CD8-positive, alpha-beta T cell (primary cell): ENCODE measurements at regions of chr9 and their contacts with region 1.

Region 1: DNA sequence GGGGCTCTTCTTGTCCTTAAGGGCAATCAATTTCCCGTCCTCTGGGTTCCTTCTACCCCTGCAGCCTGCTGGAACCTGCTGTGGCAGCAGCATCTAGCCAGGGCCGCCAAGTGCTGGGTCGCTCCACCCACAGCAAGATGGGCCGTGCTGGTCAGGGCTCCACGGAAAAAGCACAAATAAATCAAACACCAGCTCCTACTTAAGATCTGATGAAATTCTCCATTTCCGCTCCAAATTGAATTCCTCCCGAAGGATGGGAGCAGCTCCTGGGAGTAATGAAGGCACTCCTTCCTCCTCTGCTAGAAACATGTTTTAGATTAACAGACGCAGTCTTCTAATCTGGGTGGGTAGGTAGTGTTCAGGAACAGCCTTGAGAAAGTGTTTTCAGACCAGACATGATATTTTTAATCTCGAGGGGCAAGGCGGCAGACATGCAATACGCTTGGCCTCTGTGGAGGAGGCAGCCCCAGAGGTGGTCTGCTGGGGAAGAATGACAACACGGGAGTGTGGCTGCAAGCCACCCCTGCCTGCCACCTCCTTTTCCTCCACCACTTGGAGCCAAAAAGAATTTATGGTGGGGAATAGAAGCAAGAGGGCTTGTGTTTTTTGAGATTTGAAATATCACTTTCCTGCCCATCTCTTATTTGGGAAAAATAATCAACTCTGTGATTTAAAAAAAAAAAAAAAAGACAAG is 194.0 kb downstream of the AOPEP start:
- DNase-seq: no peak
- ATAC-seq: no peak
- H3K4me3 ChIP-seq: no peak overlapping the region
- H3K4me3 Mint-ChIP-seq: no peak overlapping the region
- H3K27ac ChIP-seq: no peak overlapping the region
- H3K27ac Mint-ChIP-seq: no peak overlapping the region
- H3K4me1 ChIP-seq: no peaks in the 10 kb centered on the region
- H3K4me1 Mint-ChIP-seq: peaks cover 3% of the 10 kb centered on the region
- H3K27me3 ChIP-seq: no peaks in the 10 kb centered on the region
- H3K27me3 Mint-ChIP-seq: no peaks in the 10 kb centered on the region
- CTCF ChIP-seq: no peak

Region 2: DNA sequence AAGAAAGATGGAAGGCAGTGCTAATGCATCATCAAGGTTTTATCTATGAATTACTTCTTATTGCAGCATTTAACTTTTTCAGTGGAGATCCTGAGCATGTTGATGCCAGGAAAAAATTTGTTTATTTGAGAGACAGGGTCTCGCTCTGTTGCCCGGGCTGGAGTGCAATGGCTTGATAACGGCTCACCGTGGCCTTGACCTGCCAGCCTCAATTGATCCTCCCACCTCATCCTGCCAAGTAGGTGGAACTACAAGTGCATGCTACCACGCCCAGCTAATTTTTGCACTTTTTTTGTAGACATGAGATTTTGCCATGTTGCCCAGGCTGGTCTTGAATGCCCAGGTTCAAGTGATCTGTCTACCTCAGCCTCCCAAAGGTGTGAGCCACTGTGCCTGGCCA is 146.9 kb before region 1 on chr9:
- CTCF ChIA-PET with region 1: interaction called, 3 read pairs
- POLR2A ChIA-PET with region 1: no interaction called
- intact Hi-C with region 1: loop called in 1 of 2 experiments (anchors 1 kb)
- DNase-seq: no peak
- ATAC-seq: no peak
- H3K4me3 ChIP-seq: no peak overlapping the region
- H3K4me3 Mint-ChIP-seq: no peak overlapping the region
- H3K27ac ChIP-seq: no peak overlapping the region
- H3K27ac Mint-ChIP-seq: no peak overlapping the region
- H3K4me1 ChIP-seq: no peaks in the 10 kb centered on the region
- H3K4me1 Mint-ChIP-seq: peaks cover 5% of the 10 kb centered on the region
- H3K27me3 ChIP-seq: no peaks in the 10 kb centered on the region
- H3K27me3 Mint-ChIP-seq: no peaks in the 10 kb centered on the region
- CTCF ChIP-seq: no peak

Region 3: DNA sequence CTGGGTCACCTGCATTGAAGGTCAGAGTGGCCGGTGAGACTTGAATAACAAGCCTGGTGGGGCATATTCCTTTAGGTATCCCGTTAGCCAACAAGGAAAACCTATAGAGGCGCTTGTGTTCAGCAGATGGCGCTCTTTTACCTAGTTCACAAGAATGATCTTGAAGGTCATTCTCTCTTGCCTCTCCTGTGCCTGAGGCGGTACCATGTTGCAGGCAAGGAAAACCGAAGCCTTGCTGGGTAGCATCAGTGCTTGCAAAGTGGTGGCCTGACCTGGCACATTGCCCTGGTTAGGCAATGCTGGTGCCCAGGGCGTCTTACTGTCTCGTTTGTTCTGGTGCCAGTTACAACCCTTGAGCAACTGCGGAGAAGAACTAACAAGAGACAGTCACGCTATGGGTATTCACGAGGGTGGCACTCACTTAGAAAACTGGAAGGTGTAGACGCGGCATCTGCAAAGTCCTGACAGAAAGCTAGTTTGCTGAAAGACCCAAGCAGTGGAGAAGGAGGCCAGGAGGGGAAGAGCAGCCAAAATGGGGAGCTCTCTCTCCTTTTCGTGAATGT is 137.4 kb before region 1 on chr9:
- CTCF ChIA-PET with region 1: interaction called, 30 read pairs
- POLR2A ChIA-PET with region 1: no interaction called
- intact Hi-C with region 1: loop called (anchors 1 to 2 kb)
- DNase-seq: peak; percentile 4 to 64 (median 37)
- ATAC-seq: no peak
- H3K4me3 ChIP-seq: no peak overlapping the region
- H3K4me3 Mint-ChIP-seq: no peak overlapping the region
- H3K27ac ChIP-seq: no peak overlapping the region
- H3K27ac Mint-ChIP-seq: no peak overlapping the region
- H3K4me1 ChIP-seq: no peaks in the 10 kb centered on the region
- H3K4me1 Mint-ChIP-seq: peaks cover 4% of the 10 kb centered on the region
- H3K27me3 ChIP-seq: no peaks in the 10 kb centered on the region
- H3K27me3 Mint-ChIP-seq: no peaks in the 10 kb centered on the region
- CTCF ChIP-seq: peak; percentile 53

Region 4: DNA sequence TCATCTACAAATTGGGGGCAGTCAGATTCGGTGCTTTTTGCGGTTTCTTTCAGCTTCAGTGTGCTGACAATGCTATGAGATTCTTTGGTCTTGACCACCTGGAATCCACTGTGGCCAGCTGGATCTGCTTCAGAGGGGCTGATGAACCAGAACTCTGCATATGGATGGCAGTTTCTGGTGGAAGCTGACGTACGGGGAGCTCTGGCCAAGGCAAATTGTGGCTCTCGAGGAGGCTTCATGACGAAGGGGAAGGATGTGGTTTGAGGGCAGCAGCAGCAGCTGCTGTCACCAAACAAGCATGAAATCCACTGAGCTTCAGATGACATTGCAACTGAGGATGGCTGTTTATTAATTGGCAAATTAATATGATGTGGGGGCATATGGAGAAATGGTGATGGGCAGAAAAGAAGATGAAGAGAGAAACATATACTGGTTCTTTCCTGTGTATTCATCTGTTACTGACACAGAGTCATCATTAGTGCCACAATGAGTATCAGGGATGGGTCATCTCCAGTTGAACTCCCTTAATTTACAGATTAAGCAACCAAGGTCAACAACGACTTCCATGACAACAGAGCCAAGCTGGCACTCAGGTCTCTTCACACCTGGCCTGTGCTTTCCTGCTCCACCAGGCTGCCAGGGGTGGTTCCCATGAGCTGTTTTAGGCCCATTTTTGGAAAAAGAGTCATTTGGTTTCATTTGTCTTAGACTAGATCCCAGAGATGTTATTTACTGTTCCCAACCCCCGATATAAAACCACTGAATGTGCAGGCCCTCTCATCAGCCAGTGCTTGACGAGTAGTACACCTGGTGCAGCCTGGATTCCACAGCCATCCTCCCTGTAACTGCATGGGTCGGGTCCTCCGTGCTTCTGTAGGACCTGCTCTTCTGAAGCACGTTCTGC is 59.3 kb before region 1 on chr9:
- CTCF ChIA-PET with region 1: no interaction called
- POLR2A ChIA-PET with region 1: no interaction called
- intact Hi-C with region 1: loop called in 1 of 2 experiments (anchors 5 kb)
- DNase-seq: peak; percentile 47 to 94 (median 70)
- ATAC-seq: peak; percentile 86
- H3K4me3 ChIP-seq: peak overlapping the region; percentile 5 to 31
- H3K4me3 Mint-ChIP-seq: peak overlapping the region; percentile 76
- H3K27ac ChIP-seq: peak overlapping the region; percentile 34 to 83
- H3K27ac Mint-ChIP-seq: peak overlapping the region; percentile 88
- H3K4me1 ChIP-seq: peaks cover 29% of the 10 kb centered on the region
- H3K4me1 Mint-ChIP-seq: peaks cover 46% of the 10 kb centered on the region
- H3K27me3 ChIP-seq: no peaks in the 10 kb centered on the region
- H3K27me3 Mint-ChIP-seq: no peaks in the 10 kb centered on the region
- CTCF ChIP-seq: no peak

Region 5: GRCh38 chr9:94961870-94962269 is 41.3 kb after region 1 on chr9:
- CTCF ChIA-PET with region 1: no interaction called
- POLR2A ChIA-PET with region 1: no interaction called
- intact Hi-C with region 1: no loop called
- DNase-seq: no peak
- ATAC-seq: no peak
- H3K4me3 ChIP-seq: no peak overlapping the region
- H3K4me3 Mint-ChIP-seq: no peak overlapping the region
- H3K27ac ChIP-seq: no peak overlapping the region
- H3K27ac Mint-ChIP-seq: no peak overlapping the region
- H3K4me1 ChIP-seq: no peaks in the 10 kb centered on the region
- H3K4me1 Mint-ChIP-seq: no peaks in the 10 kb centered on the region
- H3K27me3 ChIP-seq: no peaks in the 10 kb centered on the region
- H3K27me3 Mint-ChIP-seq: no peaks in the 10 kb centered on the region
- CTCF ChIP-seq: no peak

Region 6: DNA sequence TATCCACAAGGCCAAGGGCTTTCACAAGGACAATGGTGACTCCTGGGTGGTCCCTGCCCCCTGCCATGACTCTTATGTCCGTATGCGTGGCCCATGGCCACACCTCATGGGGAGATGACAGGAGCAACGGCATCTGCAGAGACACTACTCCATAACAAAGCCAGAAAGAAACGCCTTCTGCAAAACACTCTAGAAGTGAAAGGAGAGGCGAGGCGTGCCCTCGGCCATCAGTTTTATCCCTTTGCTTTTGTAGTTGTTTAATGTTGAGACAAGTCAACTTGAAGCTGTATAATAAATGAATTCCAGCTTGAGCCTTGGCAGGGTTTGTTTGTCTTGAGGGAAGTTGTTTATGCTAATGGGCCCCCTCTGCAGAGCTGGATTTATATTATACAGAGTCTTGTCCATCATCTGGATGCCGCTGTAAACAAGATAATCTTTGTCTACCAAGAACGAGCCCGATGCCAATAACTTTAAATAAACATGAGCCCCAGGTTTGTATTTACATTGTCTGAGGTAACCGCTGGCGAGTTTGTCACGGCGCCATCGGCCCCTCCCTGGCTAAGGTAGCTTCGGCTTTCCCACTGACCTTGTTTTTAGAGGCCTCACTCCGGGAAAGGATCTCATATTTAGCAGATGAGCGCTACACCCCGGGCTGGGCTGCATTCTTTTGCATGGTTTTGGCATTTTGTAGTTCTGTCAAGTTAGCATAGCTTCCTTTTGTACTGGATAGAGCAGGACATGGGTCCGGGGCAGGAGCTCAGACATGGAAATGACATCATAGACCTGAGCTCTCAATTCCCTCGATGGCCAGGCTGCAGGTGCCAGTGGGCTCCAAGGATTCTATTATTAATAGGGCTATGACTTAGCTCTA is 1120.3 kb after region 1 on chr9:
- CTCF ChIA-PET with region 1: no interaction called
- POLR2A ChIA-PET with region 1: no interaction called
- intact Hi-C with region 1: no loop called
- DNase-seq: no peak
- ATAC-seq: no peak
- H3K4me3 ChIP-seq: no peak overlapping the region
- H3K4me3 Mint-ChIP-seq: no peak overlapping the region
- H3K27ac ChIP-seq: no peak overlapping the region
- H3K27ac Mint-ChIP-seq: no peak overlapping the region
- H3K4me1 ChIP-seq: peaks cover 4% of the 10 kb centered on the region
- H3K4me1 Mint-ChIP-seq: peaks cover 15% of the 10 kb centered on the region
- H3K27me3 ChIP-seq: no peaks in the 10 kb centered on the region
- H3K27me3 Mint-ChIP-seq: no peaks in the 10 kb centered on the region
- CTCF ChIP-seq: no peak